Caco-2 (cell line): ENCODE measurements at regions of chr17 and their contacts with region 1.

Region 1: DNA sequence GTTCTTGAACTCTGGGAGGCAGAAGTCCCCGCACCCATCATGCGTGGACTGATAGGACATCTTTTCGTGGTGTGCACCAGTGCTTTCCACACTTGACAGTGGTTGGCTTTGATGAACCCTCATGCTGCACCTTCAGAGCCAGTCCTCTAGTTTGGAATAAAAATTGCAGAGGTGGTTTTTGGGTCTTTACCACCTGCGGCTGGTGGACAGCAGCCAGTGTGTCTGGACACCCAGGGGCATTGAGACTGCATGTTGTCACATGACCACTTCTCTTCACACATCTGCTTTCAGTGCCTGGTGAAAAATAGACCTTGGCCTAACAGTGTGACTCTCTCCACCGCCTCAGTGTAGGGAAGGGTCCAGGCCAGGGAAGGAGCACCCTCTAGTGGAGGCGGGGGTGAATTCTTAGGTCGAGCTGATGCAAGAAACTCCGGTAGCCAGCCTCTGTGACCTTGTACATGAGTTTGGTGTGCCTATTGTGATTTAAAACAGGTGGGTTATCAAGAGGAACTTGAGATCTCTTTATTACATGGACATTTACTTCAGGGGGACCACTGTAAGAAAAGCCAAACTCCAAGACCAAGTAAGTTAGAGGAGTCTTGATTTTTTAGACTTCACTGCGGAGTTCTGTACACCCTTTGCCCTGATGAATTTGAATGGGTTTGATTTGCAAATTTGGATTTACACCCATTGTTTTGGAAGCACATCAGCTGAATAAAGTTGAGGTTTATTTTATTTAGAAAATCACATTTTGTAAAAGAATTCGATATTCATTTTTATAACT is 17.9 kb downstream of the GOSR2 start:
- DNase-seq: peak; percentile 82 to 89
- H3K4me3 ChIP-seq: no peak overlapping the region
- H3K4me3 Mint-ChIP-seq: no peak overlapping the region
- H3K27ac Mint-ChIP-seq: peak overlapping the region; percentile 53
- H3K4me1 ChIP-seq: peaks cover 18% of the 10 kb centered on the region
- H3K4me1 Mint-ChIP-seq: peaks cover 17% of the 10 kb centered on the region
- H3K27me3 ChIP-seq: no peaks in the 10 kb centered on the region
- H3K27me3 Mint-ChIP-seq: no peaks in the 10 kb centered on the region
- CTCF ChIP-seq: peak; percentile 93 to 95

Region 2: GRCh38 chr17:46851029-46851741 is 89.6 kb before region 1 on chr17 and contains the start of gene WNT9B:
- CTCF ChIA-PET with region 1: no interaction called
- POLR2A ChIA-PET with region 1: no interaction called
- intact Hi-C with region 1: loop called (anchors 5 kb)
- DNase-seq: peak; percentile 90 to 95
- H3K4me3 ChIP-seq: peak within 1 kb of the TSS; percentile 66
- H3K4me3 Mint-ChIP-seq: peak within 1 kb of the TSS; percentile 86
- H3K27ac Mint-ChIP-seq: no peak within 1 kb of the TSS
- H3K4me1 ChIP-seq: peaks cover 12% of the 10 kb centered on the region
- H3K4me1 Mint-ChIP-seq: peaks cover 6% of the 10 kb centered on the region
- H3K27me3 ChIP-seq: no peaks in the 10 kb centered on the region
- H3K27me3 Mint-ChIP-seq: peaks cover 15% of the 10 kb centered on the region
- CTCF ChIP-seq: peak in 1 of 2 experiments; percentile 17
- total RNA-seq, gene WNT9B: not detected in 2 replicates

Region 3: GRCh38 chr17:46876353-46876887 is 64.4 kb before region 1 on chr17:
- CTCF ChIA-PET with region 1: no interaction called
- POLR2A ChIA-PET with region 1: no interaction called
- intact Hi-C with region 1: no loop called
- DNase-seq: peak; percentile 56 to 74
- H3K4me3 ChIP-seq: no peak overlapping the region
- H3K4me3 Mint-ChIP-seq: no peak overlapping the region
- H3K27ac Mint-ChIP-seq: no peak overlapping the region
- H3K4me1 ChIP-seq: no peaks in the 10 kb centered on the region
- H3K4me1 Mint-ChIP-seq: no peaks in the 10 kb centered on the region
- H3K27me3 ChIP-seq: no peaks in the 10 kb centered on the region
- H3K27me3 Mint-ChIP-seq: no peaks in the 10 kb centered on the region
- CTCF ChIP-seq: peak; percentile 73 to 88

Region 4: GRCh38 chr17:46971647-46972300 is 31.0 kb after region 1 on chr17:
- CTCF ChIA-PET with region 1: no interaction called
- POLR2A ChIA-PET with region 1: no interaction called
- intact Hi-C with region 1: no loop called
- DNase-seq: no peak
- H3K4me3 ChIP-seq: no peak overlapping the region
- H3K4me3 Mint-ChIP-seq: no peak overlapping the region
- H3K27ac Mint-ChIP-seq: no peak overlapping the region
- H3K4me1 ChIP-seq: no peaks in the 10 kb centered on the region
- H3K4me1 Mint-ChIP-seq: peaks cover 6% of the 10 kb centered on the region
- H3K27me3 ChIP-seq: peaks cover 2% of the 10 kb centered on the region
- H3K27me3 Mint-ChIP-seq: peaks cover 38% of the 10 kb centered on the region
- CTCF ChIP-seq: no peak

Region 5: GRCh38 chr17:46995841-46996571 is 55.2 kb after region 1 on chr17:
- CTCF ChIA-PET with region 1: interaction called, 11 read pairs
- POLR2A ChIA-PET with region 1: no interaction called
- intact Hi-C with region 1: loop called (anchors 1 kb)
- DNase-seq: no peak
- H3K4me3 ChIP-seq: no peak overlapping the region
- H3K4me3 Mint-ChIP-seq: no peak overlapping the region
- H3K27ac Mint-ChIP-seq: no peak overlapping the region
- H3K4me1 ChIP-seq: no peaks in the 10 kb centered on the region
- H3K4me1 Mint-ChIP-seq: no peaks in the 10 kb centered on the region
- H3K27me3 ChIP-seq: no peaks in the 10 kb centered on the region
- H3K27me3 Mint-ChIP-seq: peaks cover 3% of the 10 kb centered on the region
- CTCF ChIP-seq: no peak